Lower lobe of right lung (tissue), 2 donors: ENCODE measurements at regions of chr5 and their contacts with region 1.

Region 1: DNA sequence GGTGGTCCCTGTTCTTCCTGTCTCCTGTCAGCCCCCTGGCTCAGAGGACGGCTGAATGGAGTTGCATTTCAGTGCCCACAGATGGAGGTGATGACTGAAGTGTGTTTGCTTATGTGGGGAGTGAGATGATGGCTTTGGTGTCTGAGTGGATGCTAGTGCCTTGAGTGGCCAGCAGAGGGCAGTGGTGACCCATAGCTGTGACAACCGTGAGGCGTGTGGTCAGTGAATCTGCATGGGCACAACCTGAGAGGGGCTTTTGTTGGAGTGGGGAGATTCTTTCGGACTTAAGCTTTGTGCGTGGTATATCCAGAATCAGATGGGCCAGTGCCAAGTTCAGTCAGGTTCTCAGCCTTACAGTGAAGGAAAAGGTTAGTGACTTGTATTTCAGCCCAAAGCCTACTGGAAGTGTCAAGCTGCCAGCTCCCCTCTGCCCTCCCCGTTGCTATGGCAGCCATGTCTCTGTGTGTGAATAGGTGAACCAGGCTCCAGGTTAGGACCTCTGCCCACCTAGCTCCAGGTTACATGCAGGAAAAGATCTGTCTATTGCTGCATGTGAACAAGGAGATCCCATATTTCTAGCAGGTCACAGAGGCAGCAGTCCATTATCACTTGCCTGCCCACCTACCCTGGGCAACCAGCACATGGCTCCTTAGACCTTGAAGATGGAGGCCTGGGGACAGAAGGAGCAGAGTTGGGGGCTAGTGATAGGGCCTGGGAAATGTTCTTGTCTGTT is 14.7 kb upstream of the CXXC5 start:
- DNase-seq: peak; percentile 71
- ATAC-seq: peak; percentile 49 to 59
- H3K4me3 ChIP-seq: no peak overlapping the region
- H3K27ac ChIP-seq: no peak overlapping the region
- H3K4me1 ChIP-seq: peaks cover 37% of the 10 kb centered on the region
- H3K27me3 ChIP-seq: no peaks in the 10 kb centered on the region
- CTCF ChIP-seq: peak; percentile 96

Region 2: DNA sequence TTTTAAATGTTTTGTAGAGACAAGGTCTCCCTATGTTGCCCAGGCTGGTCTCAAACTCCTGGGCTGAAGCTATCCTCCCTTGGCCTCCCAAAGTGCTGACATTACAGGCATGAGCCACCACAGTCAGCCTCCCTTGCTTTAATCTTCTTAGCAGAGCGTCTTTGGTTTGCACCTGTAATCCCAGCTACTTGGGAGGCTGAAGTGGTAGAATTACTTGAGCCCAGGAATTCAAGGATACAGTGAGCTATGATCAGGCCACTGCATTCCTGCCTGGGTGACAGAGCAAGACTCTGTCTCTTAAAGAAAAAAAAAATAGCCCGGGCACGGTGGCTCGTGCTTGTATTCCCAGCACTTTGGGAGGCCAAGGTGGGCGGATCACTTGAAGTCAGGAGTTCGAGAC is 44.5 kb before region 1 on chr5:
- intact Hi-C with region 1: no loop called
- DNase-seq: no peak
- ATAC-seq: peak; percentile 35 to 45
- H3K4me3 ChIP-seq: no peak overlapping the region
- H3K27ac ChIP-seq: no peak overlapping the region
- H3K4me1 ChIP-seq: peaks cover 15% of the 10 kb centered on the region
- H3K27me3 ChIP-seq: no peaks in the 10 kb centered on the region
- CTCF ChIP-seq: no peak

Region 3: DNA sequence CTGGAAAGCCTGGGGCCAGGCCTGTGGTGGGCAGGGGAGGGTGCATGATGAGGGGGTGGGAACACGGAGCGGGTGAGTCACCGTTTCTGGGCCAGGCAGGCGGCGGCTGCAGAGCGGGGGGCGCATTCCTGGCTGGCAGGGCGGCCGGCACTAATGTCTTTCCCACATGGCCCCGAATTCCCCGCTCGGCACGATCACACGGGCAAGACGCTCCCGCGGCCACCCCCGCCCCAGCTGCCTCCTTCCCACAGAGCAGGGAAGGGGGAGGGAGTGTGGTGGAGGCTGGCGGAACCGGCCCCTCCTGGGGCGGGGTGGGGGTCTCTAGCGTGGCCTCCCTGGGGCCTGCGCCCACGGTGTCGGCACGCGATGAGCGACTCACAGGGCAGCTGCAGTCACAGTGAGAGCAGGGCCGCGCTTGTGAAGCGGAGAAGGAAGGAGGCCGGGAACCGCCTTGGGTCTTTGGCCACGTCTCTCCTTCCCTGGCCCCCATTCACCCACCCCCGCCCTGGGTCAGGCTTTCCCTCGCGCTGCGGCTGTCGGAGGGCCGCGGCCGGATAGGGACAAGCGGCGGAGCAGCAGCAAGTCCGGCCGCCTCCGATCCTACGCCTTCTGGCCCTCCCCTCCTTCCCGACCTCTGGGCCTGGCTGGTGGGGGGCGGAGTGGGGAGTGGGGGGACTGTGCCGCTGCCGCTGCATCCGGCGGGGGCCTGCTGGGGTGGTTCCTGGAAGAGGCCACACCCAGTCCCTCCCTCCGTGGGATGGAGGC is 63.6 kb after region 1 on chr5:
- intact Hi-C with region 1: loop called (anchors 10 kb)
- DNase-seq: peak; percentile 77
- ATAC-seq: peak; percentile 68 to 80
- H3K4me3 ChIP-seq: peak overlapping the region; percentile 56
- H3K27ac ChIP-seq: peak overlapping the region; percentile 85
- H3K4me1 ChIP-seq: peaks cover 32% of the 10 kb centered on the region
- H3K27me3 ChIP-seq: no peaks in the 10 kb centered on the region
- CTCF ChIP-seq: no peak

Region 4: GRCh38 chr5:139765409-139766217 is 132.2 kb after region 1 on chr5:
- intact Hi-C with region 1: loop called (anchors 10 kb)
- DNase-seq: peak; percentile 86
- ATAC-seq: peak; percentile 93 to 94
- H3K4me3 ChIP-seq: peak overlapping the region; percentile 67
- H3K27ac ChIP-seq: no peak overlapping the region
- H3K4me1 ChIP-seq: peaks cover 13% of the 10 kb centered on the region
- H3K27me3 ChIP-seq: peaks cover 29% of the 10 kb centered on the region
- CTCF ChIP-seq: peak; percentile 99